Aorta (tissue), 5 donors: ENCODE measurements at regions of chr13 and their contacts with region 1.

Region 1: GRCh38 chr13:96817336-96817941 is 176.8 kb downstream of the OXGR1 start:
- DNase-seq: no peak
- ATAC-seq: no peak
- H3K4me3 ChIP-seq: no peak overlapping the region
- H3K27ac ChIP-seq: no peak overlapping the region
- H3K4me1 ChIP-seq: peaks cover 17 to 19% of the 10 kb centered on the region in 2 donors
- H3K27me3 ChIP-seq: no peaks in the 10 kb centered on the region

Region 2: DNA sequence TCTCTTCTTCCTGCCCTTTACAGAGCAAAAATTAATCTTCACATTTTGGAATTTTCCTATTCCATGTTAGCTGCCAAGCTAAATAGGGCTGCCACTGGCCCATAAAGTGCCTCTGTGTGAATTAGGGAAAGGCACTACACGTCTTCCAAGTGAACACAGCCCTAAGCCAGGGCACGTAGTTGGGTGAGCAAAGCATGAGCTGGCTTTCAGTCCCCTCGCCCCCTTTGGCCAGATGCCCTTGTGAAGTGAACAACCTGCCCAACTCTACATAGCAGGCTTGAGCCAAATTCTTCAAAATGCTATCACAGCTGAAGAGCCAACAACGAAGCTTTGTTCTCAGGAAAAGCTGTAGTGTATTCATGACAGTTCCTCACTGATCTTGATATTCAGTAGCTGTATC is 36.3 kb before region 1 on chr13:
- intact Hi-C with region 1: loop called in 1 of 2 experiments (anchors 5 kb)
- DNase-seq: peak; percentile 87 to 89
- ATAC-seq: peak; percentile 88
- H3K4me3 ChIP-seq: no peak overlapping the region
- H3K27ac ChIP-seq: peak overlapping the region in 1 of 2 donors; percentile 72
- H3K4me1 ChIP-seq: peaks cover 4% of the 10 kb centered on the region in 2 donors
- H3K27me3 ChIP-seq: no peaks in the 10 kb centered on the region

Region 3: DNA sequence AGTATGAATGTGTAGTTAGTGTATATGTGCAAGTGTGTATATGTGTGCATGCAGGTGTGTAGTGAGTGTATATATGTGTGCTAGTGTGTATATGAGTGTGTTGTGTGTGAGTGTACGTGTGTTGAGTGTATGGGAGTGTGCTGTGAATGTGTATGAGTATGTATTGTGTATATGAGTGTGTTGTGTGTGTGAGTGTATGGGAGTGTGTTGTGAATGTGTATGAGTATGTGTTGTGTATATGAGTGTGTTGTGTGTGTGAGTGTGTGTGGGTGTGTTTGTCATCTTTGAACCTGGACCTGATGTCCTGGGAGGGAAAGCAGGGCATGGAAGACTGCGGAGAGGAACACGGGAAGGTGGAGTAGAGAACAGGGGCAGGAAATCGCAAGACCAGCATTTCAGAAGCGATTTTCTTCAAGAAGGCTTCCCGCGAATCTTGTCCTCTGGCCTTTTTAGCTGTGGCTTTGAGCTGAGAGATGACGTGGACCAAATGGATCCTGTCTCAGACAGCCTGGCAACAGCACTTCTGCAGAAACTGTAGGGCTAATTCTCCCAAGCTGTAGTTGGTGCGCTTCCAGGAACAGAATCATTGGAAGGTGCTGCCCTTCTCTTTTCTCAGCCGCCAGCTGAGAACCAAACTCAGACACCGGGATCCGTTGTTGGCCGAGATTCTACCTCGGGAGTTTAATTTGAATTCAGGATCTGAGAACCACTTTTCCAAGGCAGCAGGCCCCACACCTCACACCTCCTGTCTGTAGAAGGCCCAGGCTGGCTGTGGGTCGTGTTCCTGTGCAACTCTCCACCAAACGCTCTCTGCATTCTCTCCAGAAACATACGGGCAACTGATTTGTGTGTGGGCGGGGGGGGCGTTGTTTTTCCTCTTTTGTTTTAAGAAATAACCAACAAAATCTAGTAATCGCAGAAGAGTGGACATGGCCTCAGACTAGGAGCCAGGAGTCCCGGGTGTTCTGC is 521.9 kb after region 1 on chr13:
- intact Hi-C with region 1: no loop called
- DNase-seq: peak; percentile 68 to 74
- ATAC-seq: peak; percentile 76
- H3K4me3 ChIP-seq: no peak overlapping the region
- H3K27ac ChIP-seq: peak overlapping the region in 1 of 2 donors; percentile 93
- H3K4me1 ChIP-seq: peaks cover 5 to 6% of the 10 kb centered on the region in 2 donors
- H3K27me3 ChIP-seq: no peaks in the 10 kb centered on the region